Activated CD4-positive, alpha-beta memory T cell treated with anti-CD3 and anti-CD28 coated beads for 36 hours (primary cell): ENCODE measurements at regions of chrX and their contacts with region 1.

Region 1: GRCh38 chrX:19776753-19777152 is 110.6 kb downstream of the SH3KBP1 start:
- DNase-seq: peak; percentile 68
- H3K4me3 Mint-ChIP-seq: peak overlapping the region; percentile 11
- H3K27ac Mint-ChIP-seq: peak overlapping the region; percentile 83
- H3K4me1 Mint-ChIP-seq: peaks cover 65% of the 10 kb centered on the region
- H3K27me3 Mint-ChIP-seq: no peaks in the 10 kb centered on the region

Region 2: DNA sequence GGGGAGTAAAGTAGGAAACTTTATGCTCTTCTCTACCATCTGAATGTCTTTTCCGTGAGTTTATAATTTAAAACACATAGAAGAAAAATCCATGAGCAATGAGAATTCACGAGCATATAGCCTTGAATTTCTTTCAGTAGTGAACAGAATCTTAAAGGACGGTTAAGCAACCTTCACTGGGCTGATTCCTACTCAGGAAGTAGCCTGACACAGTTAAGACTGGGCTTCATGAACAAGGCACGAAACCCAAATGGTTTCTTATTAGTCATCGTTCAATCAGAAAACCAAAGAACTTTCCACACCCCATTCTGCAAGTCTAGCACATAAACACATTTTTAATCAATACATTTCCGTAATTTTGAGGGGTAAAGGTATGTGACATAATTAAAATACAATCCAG is 14.8 kb after region 1 on chrX:
- CTCF ChIA-PET with region 1: interaction called, 3 read pairs
- POLR2A ChIA-PET with region 1: interaction called, 3 read pairs
- intact Hi-C with region 1: loop called (anchors 2 kb)
- DNase-seq: no peak
- H3K4me3 Mint-ChIP-seq: peak overlapping the region; percentile 20
- H3K27ac Mint-ChIP-seq: peak overlapping the region; percentile 70
- H3K4me1 Mint-ChIP-seq: peaks cover 77% of the 10 kb centered on the region
- H3K27me3 Mint-ChIP-seq: no peaks in the 10 kb centered on the region